CD8-positive, alpha-beta T cell (primary cell): ENCODE measurements at regions of chr11 and their contacts with region 1.

Region 1: DNA sequence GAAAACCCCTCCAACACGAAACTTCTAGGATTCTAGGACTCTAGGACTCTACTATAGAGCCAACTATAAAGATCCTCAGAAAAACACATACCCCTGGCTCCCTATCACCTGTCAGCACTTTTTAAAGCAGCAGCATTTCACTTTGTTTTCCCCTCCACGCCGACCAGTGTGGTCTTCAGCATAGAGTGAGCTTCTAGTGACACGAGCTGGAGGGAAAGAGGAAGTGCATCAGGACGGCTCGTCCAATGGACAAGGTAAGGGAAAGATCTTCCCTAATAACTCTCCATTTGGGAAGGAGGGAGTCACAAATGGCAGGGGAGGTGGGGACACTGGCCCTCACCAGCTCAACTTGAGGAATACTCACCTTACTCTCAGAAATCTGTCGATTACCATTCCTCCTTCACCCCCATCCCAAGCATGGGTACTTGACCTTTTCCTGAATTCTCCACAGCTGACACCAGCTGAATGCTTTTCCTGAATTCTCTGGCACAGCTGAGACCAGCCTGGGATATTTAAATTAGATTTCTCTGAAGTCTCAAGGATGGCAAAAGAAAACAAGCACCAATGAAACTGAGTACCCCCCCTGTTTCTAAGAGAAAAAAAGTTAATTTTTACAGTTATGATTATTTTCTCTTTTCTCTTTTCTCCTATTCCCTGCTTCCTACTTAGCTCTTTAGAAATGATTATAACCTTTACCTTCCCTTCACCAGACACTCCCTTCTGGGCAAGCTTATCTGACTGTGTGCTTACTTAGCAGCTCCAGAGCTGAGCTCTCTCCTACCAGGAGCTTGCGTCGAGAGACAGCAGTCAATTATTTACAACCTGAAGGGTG is 33.3 kb upstream of the NNMT start:
- DNase-seq: peak in 3 of 9 experiments; percentile 30 to 55 (median 42)
- ATAC-seq: peak; percentile 65
- H3K4me3 ChIP-seq: no peak overlapping the region
- H3K4me3 Mint-ChIP-seq: no peak overlapping the region
- H3K27ac ChIP-seq: no peak overlapping the region
- H3K27ac Mint-ChIP-seq: no peak overlapping the region
- H3K4me1 ChIP-seq: no peaks in the 10 kb centered on the region
- H3K4me1 Mint-ChIP-seq: peaks cover 4% of the 10 kb centered on the region
- H3K27me3 ChIP-seq: no peaks in the 10 kb centered on the region
- H3K27me3 Mint-ChIP-seq: no peaks in the 10 kb centered on the region
- CTCF ChIP-seq: peak; percentile 42

Region 2: DNA sequence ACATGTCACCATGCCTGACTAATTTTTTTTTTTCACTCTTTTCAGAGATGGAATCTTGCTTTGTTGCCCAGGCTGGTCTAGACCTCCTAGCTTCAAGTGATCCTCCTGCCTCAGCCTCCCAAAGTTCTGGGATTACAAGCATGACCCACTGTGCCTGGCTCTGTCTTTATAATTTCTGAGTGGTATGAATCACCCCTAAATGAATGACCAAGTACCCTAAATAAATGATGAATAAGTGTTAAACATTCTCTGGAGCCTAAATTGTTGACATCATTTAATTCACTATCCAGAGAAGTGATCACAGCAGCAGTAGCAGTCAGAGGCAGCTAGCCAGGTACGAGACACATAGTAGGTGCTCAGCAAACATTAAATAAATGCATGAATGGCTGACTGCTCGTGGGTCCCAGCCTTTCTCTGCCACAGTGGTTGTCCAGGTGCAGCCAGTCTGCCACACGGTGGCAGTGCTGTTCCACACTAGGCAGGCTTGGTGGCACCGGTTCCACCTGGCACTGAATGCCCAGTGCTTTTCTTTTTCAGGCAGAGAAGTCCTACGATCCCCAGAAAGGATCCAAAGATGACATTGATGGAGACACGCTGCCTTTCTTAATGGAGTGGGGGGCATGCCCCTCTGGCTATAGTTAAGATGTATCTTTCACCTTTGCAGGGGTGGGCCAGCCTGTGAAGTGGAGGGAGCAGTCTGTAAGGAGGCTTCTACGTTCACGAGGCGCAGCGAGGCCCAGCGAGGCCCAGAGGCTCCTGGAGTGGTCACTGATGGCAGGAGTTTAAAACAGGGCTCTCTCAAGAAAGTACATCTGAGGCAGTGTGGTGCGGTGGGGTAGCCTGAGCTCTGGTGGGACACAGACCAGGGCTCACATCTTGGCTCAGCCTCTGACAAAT is 957.2 kb before region 1 on chr11:
- CTCF ChIA-PET with region 1: no interaction called
- POLR2A ChIA-PET with region 1: no interaction called
- intact Hi-C with region 1: loop called in 1 of 2 experiments (anchors 2 kb)
- DNase-seq: peak; percentile 44 to 83 (median 67)
- ATAC-seq: peak; percentile 79
- H3K4me3 ChIP-seq: no peak overlapping the region
- H3K4me3 Mint-ChIP-seq: no peak overlapping the region
- H3K27ac ChIP-seq: no peak overlapping the region
- H3K27ac Mint-ChIP-seq: no peak overlapping the region
- H3K4me1 ChIP-seq: no peaks in the 10 kb centered on the region
- H3K4me1 Mint-ChIP-seq: no peaks in the 10 kb centered on the region
- H3K27me3 ChIP-seq: peaks cover 0 to 2% of the 10 kb centered on the region in 2 experiments
- H3K27me3 Mint-ChIP-seq: peaks cover 8% of the 10 kb centered on the region
- CTCF ChIP-seq: peak; percentile 80

Region 3: DNA sequence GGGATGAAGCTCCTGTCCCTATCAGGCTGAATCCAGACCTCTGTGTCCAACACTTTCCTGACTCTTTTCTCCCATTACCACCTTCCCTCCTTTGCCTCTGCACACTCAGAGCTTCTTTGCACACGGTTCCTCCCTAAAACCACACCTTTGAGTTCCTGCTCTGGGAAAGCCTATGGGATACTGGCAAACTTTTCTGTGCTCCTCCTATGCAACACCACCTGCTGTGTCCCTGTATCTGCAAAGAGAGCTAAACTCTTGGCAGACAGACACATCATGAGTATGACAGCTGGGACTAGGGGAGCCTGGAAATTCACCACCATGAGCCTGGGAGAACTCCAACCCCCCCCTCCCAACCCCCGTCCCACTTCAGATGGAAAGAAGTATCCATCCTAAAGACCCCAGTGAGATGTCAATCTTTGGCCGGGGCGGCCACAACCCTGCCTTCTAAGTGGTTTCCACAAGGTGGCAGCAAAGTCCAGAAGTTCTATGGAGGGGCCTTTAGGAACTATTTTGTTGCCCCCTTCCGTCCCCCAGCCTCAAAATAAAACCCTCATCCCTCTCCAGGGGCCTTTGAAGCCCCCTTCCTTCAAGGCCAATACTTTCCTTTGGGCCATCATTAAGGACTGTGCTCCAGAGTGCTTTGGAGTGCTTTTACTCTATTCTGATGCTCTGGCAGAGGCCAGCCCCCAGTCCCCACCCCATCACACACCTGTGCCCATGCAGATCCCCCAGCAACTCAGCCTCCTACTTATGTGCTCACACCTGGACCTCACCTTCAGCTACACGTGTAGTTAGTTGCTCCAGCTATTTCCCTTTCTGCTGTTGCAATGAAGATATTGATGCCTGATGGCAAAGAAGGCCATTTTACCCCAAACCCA is 268.6 kb before region 1 on chr11:
- CTCF ChIA-PET with region 1: interaction called, 357 read pairs
- POLR2A ChIA-PET with region 1: no interaction called
- intact Hi-C with region 1: loop called (anchors 1 kb)
- DNase-seq: peak; percentile 10 to 65 (median 41)
- ATAC-seq: no peak
- H3K4me3 ChIP-seq: no peak overlapping the region
- H3K4me3 Mint-ChIP-seq: no peak overlapping the region
- H3K27ac ChIP-seq: no peak overlapping the region
- H3K27ac Mint-ChIP-seq: no peak overlapping the region
- H3K4me1 ChIP-seq: no peaks in the 10 kb centered on the region
- H3K4me1 Mint-ChIP-seq: no peaks in the 10 kb centered on the region
- H3K27me3 ChIP-seq: peaks cover 0 to 2% of the 10 kb centered on the region in 2 experiments
- H3K27me3 Mint-ChIP-seq: peaks cover 28% of the 10 kb centered on the region
- CTCF ChIP-seq: peak; percentile 80

Region 4: GRCh38 chr11:114059278-114059983 is 203.5 kb before region 1 on chr11 and contains the start of gene ZBTB16:
- CTCF ChIA-PET with region 1: interaction called, 60 read pairs
- POLR2A ChIA-PET with region 1: interaction called, 3 read pairs
- intact Hi-C with region 1: no loop called
- DNase-seq: peak in 8 of 9 experiments; percentile 50 to 79 (median 64)
- ATAC-seq: peak; percentile 67
- H3K4me3 ChIP-seq: peak within 1 kb of the TSS; percentile 56 to 70
- H3K4me3 Mint-ChIP-seq: peak within 1 kb of the TSS; percentile 89
- H3K27ac ChIP-seq: peak within 1 kb of the TSS in 1 of 2 experiments; percentile 31
- H3K27ac Mint-ChIP-seq: peak within 1 kb of the TSS; percentile 79
- H3K4me1 ChIP-seq: peaks cover 21% of the 10 kb centered on the region
- H3K4me1 Mint-ChIP-seq: peaks cover 9% of the 10 kb centered on the region
- H3K27me3 ChIP-seq: peaks cover 3 to 14% of the 10 kb centered on the region in 2 experiments
- H3K27me3 Mint-ChIP-seq: peaks cover 21% of the 10 kb centered on the region
- CTCF ChIP-seq: no peak
- total RNA-seq, gene ZBTB16: 15.3 to 18.3 TPM

Region 5: DNA sequence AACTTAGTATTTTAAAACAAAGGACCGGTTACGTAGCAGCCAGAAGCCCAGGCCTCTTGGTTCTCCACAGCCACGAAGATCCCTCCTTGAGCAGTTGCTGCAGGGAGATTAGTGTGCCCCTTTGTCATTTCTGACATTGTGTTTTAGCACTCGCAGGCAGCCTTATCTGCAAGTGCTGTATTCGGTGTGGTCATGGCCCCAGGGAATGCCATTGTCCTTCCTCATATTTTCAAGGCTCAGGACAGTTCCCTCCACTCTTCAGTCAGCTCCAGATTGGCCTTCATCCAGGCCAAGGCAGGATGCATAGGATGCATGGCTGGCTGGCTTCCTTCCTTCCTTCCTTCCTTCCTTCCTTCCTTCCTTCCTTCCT is 114.9 kb before region 1 on chr11:
- CTCF ChIA-PET with region 1: interaction called, 10 read pairs
- POLR2A ChIA-PET with region 1: no interaction called
- intact Hi-C with region 1: no loop called
- DNase-seq: no peak
- ATAC-seq: no peak
- H3K4me3 ChIP-seq: no peak overlapping the region
- H3K4me3 Mint-ChIP-seq: no peak overlapping the region
- H3K27ac ChIP-seq: no peak overlapping the region
- H3K27ac Mint-ChIP-seq: no peak overlapping the region
- H3K4me1 ChIP-seq: peaks cover 3% of the 10 kb centered on the region
- H3K4me1 Mint-ChIP-seq: peaks cover 37% of the 10 kb centered on the region
- H3K27me3 ChIP-seq: no peaks in the 10 kb centered on the region
- H3K27me3 Mint-ChIP-seq: no peaks in the 10 kb centered on the region
- CTCF ChIP-seq: no peak

Region 6: DNA sequence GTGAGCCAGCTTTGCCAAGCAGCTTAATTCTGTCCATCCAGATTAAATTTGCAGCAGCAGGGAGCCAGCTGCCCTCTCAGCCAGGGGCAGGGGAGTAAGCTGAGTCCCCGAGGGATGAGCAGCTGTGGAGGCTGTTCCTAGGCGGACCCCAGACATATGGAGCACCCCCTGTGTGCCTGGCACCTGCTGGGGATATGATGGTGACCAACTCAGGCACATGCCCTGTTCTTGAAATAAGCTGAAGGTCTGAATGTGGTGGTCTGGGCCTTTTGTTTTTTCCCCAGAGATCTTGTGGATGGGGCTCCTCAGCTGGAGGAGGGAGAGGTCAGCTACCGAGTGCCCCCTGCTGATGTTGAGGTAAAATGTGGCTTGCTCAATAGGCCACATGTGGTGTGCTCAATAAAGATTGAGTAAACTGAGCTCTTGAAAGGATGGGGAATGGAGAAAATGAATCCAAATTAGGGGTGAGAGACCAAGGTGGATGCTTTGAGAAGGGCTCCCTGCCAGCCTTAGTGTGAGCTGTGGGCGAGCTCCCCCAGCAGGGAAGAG is 70.0 kb before region 1 on chr11:
- CTCF ChIA-PET with region 1: interaction called, 95 read pairs
- POLR2A ChIA-PET with region 1: interaction called, 3 read pairs
- intact Hi-C with region 1: loop called in 1 of 2 experiments (anchors 5 kb)
- DNase-seq: peak in 2 of 9 experiments; percentile 24 to 31
- ATAC-seq: no peak
- H3K4me3 ChIP-seq: no peak overlapping the region
- H3K4me3 Mint-ChIP-seq: no peak overlapping the region
- H3K27ac ChIP-seq: no peak overlapping the region
- H3K27ac Mint-ChIP-seq: no peak overlapping the region
- H3K4me1 ChIP-seq: no peaks in the 10 kb centered on the region
- H3K4me1 Mint-ChIP-seq: peaks cover 44% of the 10 kb centered on the region
- H3K27me3 ChIP-seq: no peaks in the 10 kb centered on the region
- H3K27me3 Mint-ChIP-seq: no peaks in the 10 kb centered on the region
- CTCF ChIP-seq: no peak

Region 7: DNA sequence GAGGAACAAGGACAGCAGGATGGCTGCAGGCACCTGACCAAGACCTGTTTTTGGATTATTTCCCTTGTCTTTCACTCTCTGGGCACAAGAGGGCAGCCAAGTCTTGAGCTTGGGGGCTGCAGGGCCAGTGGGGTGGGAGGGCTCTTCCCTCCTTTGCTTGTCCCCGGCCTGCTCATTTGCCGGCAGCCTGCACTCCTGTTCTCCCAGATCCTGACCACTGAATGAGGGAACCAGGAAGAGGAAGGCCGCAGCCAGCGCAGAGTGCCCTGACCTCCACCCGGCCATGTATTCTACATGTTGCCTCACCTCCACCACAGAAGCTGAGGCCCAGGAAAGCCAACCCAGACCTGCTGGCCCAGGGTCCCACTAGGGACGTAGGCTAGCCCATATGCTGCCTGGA is 17.8 kb after region 1 on chr11:
- CTCF ChIA-PET with region 1: interaction called, 10 read pairs
- POLR2A ChIA-PET with region 1: no interaction called
- intact Hi-C with region 1: no loop called
- DNase-seq: no peak
- ATAC-seq: no peak
- H3K4me3 ChIP-seq: no peak overlapping the region
- H3K4me3 Mint-ChIP-seq: no peak overlapping the region
- H3K27ac ChIP-seq: no peak overlapping the region
- H3K27ac Mint-ChIP-seq: no peak overlapping the region
- H3K4me1 ChIP-seq: no peaks in the 10 kb centered on the region
- H3K4me1 Mint-ChIP-seq: no peaks in the 10 kb centered on the region
- H3K27me3 ChIP-seq: no peaks in the 10 kb centered on the region
- H3K27me3 Mint-ChIP-seq: peaks cover 23% of the 10 kb centered on the region
- CTCF ChIP-seq: peak; percentile 22

Region 8: GRCh38 chr11:114340311-114341131 is 77.6 kb after region 1 on chr11:
- CTCF ChIA-PET with region 1: no interaction called
- POLR2A ChIA-PET with region 1: no interaction called
- intact Hi-C with region 1: no loop called
- DNase-seq: peak in 6 of 9 experiments; percentile 6 to 66 (median 42)
- ATAC-seq: peak; percentile 58
- H3K4me3 ChIP-seq: peak overlapping the region in 1 of 2 experiments; percentile 38
- H3K4me3 Mint-ChIP-seq: peak overlapping the region; percentile 68
- H3K27ac ChIP-seq: no peak overlapping the region
- H3K27ac Mint-ChIP-seq: no peak overlapping the region
- H3K4me1 ChIP-seq: peaks cover 5% of the 10 kb centered on the region
- H3K4me1 Mint-ChIP-seq: peaks cover 13% of the 10 kb centered on the region
- H3K27me3 ChIP-seq: no peaks in the 10 kb centered on the region
- H3K27me3 Mint-ChIP-seq: no peaks in the 10 kb centered on the region
- CTCF ChIP-seq: peak; percentile 71

Region 9: DNA sequence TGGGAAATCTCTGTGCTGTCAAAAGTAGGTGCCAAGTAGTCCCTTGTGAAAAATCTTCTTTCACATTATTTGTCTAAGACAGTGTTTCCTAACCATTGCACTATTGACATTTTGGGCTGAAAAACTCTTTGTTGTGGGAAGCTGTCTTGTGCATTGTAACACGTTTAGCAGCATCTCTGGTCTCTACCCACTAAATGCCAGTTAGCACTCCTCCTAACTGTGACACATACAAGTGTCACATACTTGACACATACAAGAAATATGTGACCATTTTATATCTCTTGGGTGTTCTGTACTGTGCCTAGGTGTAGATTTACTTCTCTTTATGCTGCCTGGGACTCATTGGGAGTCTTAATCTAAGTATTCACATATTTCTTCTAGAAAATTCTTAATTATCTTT is 239.0 kb after region 1 on chr11:
- CTCF ChIA-PET with region 1: no interaction called
- POLR2A ChIA-PET with region 1: no interaction called
- intact Hi-C with region 1: no loop called
- DNase-seq: no peak
- ATAC-seq: no peak
- H3K4me3 ChIP-seq: no peak overlapping the region
- H3K4me3 Mint-ChIP-seq: no peak overlapping the region
- H3K27ac ChIP-seq: no peak overlapping the region
- H3K27ac Mint-ChIP-seq: no peak overlapping the region
- H3K4me1 ChIP-seq: no peaks in the 10 kb centered on the region
- H3K4me1 Mint-ChIP-seq: no peaks in the 10 kb centered on the region
- H3K27me3 ChIP-seq: peaks cover 0 to 2% of the 10 kb centered on the region in 2 experiments
- H3K27me3 Mint-ChIP-seq: peaks cover 15% of the 10 kb centered on the region
- CTCF ChIP-seq: no peak

Region 10: DNA sequence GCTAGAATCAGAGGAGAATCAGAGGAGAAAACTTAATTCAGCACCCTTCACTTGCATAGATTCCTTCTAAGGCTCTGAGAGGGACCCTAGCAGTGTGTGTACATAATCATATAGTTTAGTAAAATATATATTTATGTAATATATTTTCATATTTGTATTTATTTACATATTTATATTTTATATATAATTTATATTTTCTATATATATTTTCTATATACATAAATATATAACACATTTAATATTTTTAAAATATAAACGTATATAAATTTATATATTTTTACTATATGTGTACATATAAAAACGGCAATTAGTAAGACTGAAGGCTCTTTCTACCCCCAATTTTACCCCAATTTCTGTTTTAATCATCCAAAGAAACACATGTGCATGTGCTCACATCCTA is 495.7 kb after region 1 on chr11:
- CTCF ChIA-PET with region 1: no interaction called
- POLR2A ChIA-PET with region 1: no interaction called
- intact Hi-C with region 1: no loop called
- DNase-seq: no peak
- ATAC-seq: no peak
- H3K4me3 ChIP-seq: no peak overlapping the region
- H3K4me3 Mint-ChIP-seq: no peak overlapping the region
- H3K27ac ChIP-seq: no peak overlapping the region
- H3K27ac Mint-ChIP-seq: no peak overlapping the region
- H3K4me1 ChIP-seq: no peaks in the 10 kb centered on the region
- H3K4me1 Mint-ChIP-seq: no peaks in the 10 kb centered on the region
- H3K27me3 ChIP-seq: no peaks in the 10 kb centered on the region
- H3K27me3 Mint-ChIP-seq: peaks cover 11% of the 10 kb centered on the region
- CTCF ChIP-seq: no peak